ENCODE measurements at regions of chr18 and their contacts with region 1.

Region 1: DNA sequence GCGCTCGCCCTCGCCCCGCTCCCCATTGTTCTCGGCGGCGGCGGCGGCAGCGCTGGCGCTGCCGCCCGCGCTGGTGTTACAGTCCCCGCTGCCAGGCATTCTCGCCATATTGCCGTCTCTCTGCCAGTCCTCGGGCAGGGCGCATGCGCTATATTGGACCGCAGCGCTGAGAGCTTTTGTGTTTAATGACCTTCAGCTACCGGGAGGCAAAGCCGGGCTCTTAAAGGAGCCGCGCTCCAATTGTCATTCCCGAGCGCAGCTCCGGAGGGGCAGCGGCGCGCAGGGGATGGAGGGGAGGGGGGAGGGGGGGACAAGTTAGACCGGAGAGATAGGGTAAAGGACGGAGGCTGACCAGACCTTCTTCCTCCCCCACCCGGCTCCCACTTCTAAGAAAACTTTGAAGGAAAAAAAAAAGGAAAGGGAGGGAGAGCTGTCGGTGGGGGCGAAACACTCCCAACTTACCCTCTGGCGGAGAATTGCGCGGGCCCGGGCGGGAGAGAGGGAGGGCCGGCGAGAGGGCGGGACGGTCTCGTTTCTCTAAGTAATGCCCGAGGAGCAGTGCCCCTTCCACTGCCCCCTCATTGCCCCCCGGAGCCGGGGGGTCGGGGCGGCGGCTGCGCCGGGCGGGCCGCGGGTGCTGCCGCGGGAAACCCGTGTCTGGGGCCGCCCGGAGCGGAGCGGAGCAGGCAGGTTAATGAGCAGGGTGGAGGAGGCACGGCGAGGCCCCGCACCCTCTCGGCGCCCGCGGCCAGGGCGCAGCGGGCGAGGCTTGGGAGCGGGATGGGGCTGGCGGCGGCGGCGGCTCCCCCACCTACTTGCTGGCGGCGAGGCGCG is at the start of gene KCTD1:
- DNase-seq: peak; percentile 57 to 58
- H3K4me3 ChIP-seq: peak within 1 kb of the TSS; percentile 78
- H3K27ac ChIP-seq: peak within 1 kb of the TSS; percentile 75
- H3K4me1 ChIP-seq: peaks cover 31% of the 10 kb centered on the region
- H3K27me3 ChIP-seq: no peaks in the 10 kb centered on the region
- CTCF ChIP-seq: no peak
- total RNA-seq, gene KCTD1: 20.5 and 20.7 TPM in 2 replicates

Region 2: DNA sequence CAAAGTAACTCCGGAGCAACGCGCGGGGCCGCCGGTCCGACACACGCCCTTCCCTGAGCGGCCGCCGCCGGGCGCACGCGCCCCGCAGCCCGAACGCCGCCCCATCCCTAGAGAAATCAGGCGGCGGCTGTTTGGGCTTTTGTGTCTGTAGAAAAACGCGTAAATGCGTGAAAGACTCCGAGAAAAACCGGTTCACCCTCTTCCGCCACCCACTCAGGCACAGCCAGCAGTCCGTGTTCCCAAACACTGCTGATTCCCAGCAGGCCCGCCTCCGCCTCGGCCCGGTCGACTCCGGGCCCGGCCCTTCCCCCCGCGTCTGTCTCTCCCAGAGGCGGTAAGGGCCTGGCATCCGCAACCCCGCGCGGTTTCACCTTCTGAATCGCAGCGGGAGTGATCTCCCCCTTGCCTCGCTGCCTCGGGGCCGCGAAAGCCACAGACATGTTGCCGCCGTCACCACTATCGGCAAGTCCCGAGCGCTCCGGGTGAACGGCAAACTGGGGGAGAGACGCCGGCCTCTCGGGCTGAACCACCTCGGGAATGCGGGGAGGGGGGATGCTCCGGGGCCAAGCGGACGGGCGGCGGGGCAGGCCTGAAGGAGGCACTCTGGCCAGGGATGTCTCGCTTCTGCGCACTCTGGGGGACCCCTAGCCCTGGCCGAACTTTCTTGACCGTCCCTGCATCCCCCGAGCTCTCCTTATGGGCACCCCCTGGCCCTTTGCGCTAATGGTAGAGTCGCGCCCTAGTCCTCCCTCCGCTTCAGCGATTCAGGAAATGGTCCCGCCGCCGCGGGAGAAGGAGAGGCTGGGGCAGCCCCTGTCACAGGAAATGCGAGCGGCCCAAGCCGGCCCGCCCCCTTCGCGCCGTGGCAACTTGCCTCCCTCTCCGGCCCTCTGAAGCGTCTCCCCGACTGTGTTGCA is 458.3 kb before region 1 on chr18 and contains the start of gene SS18:
- CTCF ChIA-PET with region 1: no interaction called
- POLR2A ChIA-PET with region 1: no interaction called
- intact Hi-C with region 1: loop called (anchors 5 kb)
- DNase-seq: peak; percentile 73 to 85
- H3K4me3 ChIP-seq: peak within 1 kb of the TSS; percentile 73
- H3K27ac ChIP-seq: peak within 1 kb of the TSS; percentile 60
- H3K4me1 ChIP-seq: peaks cover 12% of the 10 kb centered on the region; the same call in 1 of the 2 replicates
- H3K27me3 ChIP-seq: no peaks in the 10 kb centered on the region
- CTCF ChIP-seq: no peak
- total RNA-seq, gene SS18: 35.4 and 52.2 TPM in 2 replicates

Region 3: GRCh38 chr18:26405190-26405801 is 143.3 kb before region 1 on chr18:
- CTCF ChIA-PET with region 1: interaction called, 8 read pairs
- POLR2A ChIA-PET with region 1: no interaction called
- intact Hi-C with region 1: loop called (anchors 2 kb)
- DNase-seq: peak; percentile 32 to 51
- H3K4me3 ChIP-seq: no peak overlapping the region
- H3K27ac ChIP-seq: no peak overlapping the region
- H3K4me1 ChIP-seq: peaks cover 20% of the 10 kb centered on the region
- H3K27me3 ChIP-seq: no peaks in the 10 kb centered on the region
- CTCF ChIP-seq: peak; percentile 61

Region 4: GRCh38 chr18:26436176-26437031 is 112.2 kb before region 1 on chr18:
- CTCF ChIA-PET with region 1: no interaction called
- POLR2A ChIA-PET with region 1: no interaction called
- intact Hi-C with region 1: loop called (anchors 2 kb)
- DNase-seq: peak; percentile 32 to 95
- H3K4me3 ChIP-seq: peak overlapping the region; percentile 37; the same call in 1 of the 2 replicates
- H3K27ac ChIP-seq: peak overlapping the region; percentile 85
- H3K4me1 ChIP-seq: peaks cover 26% of the 10 kb centered on the region
- H3K27me3 ChIP-seq: no peaks in the 10 kb centered on the region
- CTCF ChIP-seq: no peak

Region 5: GRCh38 chr18:26579941-26580618 is 31.4 kb after region 1 on chr18:
- CTCF ChIA-PET with region 1: interaction called, 3 read pairs
- POLR2A ChIA-PET with region 1: interaction called, 10 read pairs
- intact Hi-C with region 1: loop called (anchors 2 kb)
- DNase-seq: peak; percentile 73 to 94
- H3K4me3 ChIP-seq: no peak overlapping the region; the same call in 1 of the 2 replicates
- H3K27ac ChIP-seq: peak overlapping the region; percentile 78
- H3K4me1 ChIP-seq: peaks cover 26% of the 10 kb centered on the region
- H3K27me3 ChIP-seq: no peaks in the 10 kb centered on the region
- CTCF ChIP-seq: no peak

Region 6: GRCh38 chr18:26656944-26657536 is 108.4 kb after region 1 on chr18:
- CTCF ChIA-PET with region 1: no interaction called
- POLR2A ChIA-PET with region 1: no interaction called
- intact Hi-C with region 1: loop called (anchors 10 kb)
- DNase-seq: peak in 1 of 2 experiments; percentile 62
- H3K4me3 ChIP-seq: peak overlapping the region; percentile 70
- H3K27ac ChIP-seq: peak overlapping the region; percentile 52
- H3K4me1 ChIP-seq: peaks cover 16% of the 10 kb centered on the region
- H3K27me3 ChIP-seq: no peaks in the 10 kb centered on the region
- CTCF ChIP-seq: no peak

Region 7: GRCh38 chr18:26734760-26735159 is 186.1 kb after region 1 on chr18:
- CTCF ChIA-PET with region 1: no interaction called
- POLR2A ChIA-PET with region 1: no interaction called
- intact Hi-C with region 1: no loop called
- DNase-seq: no peak
- H3K4me3 ChIP-seq: no peak overlapping the region
- H3K27ac ChIP-seq: no peak overlapping the region
- H3K4me1 ChIP-seq: no peaks in the 10 kb centered on the region
- H3K27me3 ChIP-seq: no peaks in the 10 kb centered on the region
- CTCF ChIP-seq: no peak